Calu3 (cell line): ENCODE measurements at regions of chr10 and their contacts with region 1.

Region 1: DNA sequence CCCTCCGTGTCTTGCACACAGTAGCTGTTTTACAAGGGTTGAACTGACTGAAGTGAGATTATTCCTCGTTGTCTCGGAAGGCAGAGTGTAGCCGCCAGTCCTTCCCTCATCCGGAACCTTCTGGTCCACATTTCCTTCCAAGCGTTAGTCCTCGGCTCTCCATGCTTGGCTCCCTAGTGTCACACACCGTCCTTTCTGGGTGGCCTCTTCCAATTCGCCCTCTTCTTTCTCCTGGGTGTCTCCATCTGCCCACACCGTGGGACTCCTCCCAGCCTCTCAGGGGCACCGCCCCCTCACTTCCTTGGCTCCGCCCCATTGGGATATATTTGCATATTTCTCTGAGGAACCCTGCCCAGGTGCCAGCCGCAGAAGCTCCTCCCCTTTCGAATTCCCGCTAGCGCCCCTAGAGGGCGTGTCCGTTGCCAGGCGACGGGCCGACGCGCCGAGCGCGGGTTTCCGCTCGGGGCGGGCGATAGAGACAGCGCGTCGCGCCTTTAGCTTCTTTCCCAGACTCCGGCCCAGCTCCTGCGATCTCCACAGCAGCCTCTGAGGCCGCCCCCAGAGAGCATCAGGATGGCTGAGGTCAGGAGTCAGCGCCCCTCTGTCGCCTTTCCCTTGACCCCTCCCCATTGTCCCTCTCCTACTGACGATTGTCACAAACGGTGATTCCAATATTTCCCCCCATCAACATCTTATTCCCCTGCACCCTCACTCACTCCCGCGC is at the start of gene CFAP58:
- DNase-seq: peak; percentile 91
- H3K4me3 Mint-ChIP-seq: no peak within 1 kb of the TSS
- H3K27ac Mint-ChIP-seq: no peak within 1 kb of the TSS
- H3K4me1 Mint-ChIP-seq: peaks cover 7% of the 10 kb centered on the region
- H3K27me3 Mint-ChIP-seq: no peaks in the 10 kb centered on the region
- CTCF ChIP-seq: peak; percentile 36
- total RNA-seq, gene CFAP58: not detected in 2 replicates

Region 2: GRCh38 chr10:104274762-104275721 is 78.4 kb before region 1 on chr10:
- CTCF ChIA-PET with region 1: interaction called, 13 read pairs
- intact Hi-C with region 1: no loop called
- DNase-seq: peak; percentile 68
- H3K4me3 Mint-ChIP-seq: peak overlapping the region; percentile 87
- H3K27ac Mint-ChIP-seq: peak overlapping the region; percentile 69
- H3K4me1 Mint-ChIP-seq: peaks cover 5% of the 10 kb centered on the region
- H3K27me3 Mint-ChIP-seq: no peaks in the 10 kb centered on the region
- CTCF ChIP-seq: peak; percentile 64

Region 3: GRCh38 chr10:104291439-104291951 is 62.0 kb before region 1 on chr10:
- CTCF ChIA-PET with region 1: interaction called, 3 read pairs
- intact Hi-C with region 1: loop called (anchors 1 kb)
- DNase-seq: peak; percentile 83
- H3K4me3 Mint-ChIP-seq: no peak overlapping the region
- H3K27ac Mint-ChIP-seq: peak overlapping the region; percentile 70
- H3K4me1 Mint-ChIP-seq: no peaks in the 10 kb centered on the region
- H3K27me3 Mint-ChIP-seq: no peaks in the 10 kb centered on the region
- CTCF ChIP-seq: peak; percentile 93

Region 4: GRCh38 chr10:104306897-104307296 is 46.6 kb before region 1 on chr10:
- CTCF ChIA-PET with region 1: interaction called, 7 read pairs
- intact Hi-C with region 1: loop called (anchors 1 kb)
- DNase-seq: no peak
- H3K4me3 Mint-ChIP-seq: no peak overlapping the region
- H3K27ac Mint-ChIP-seq: no peak overlapping the region
- H3K4me1 Mint-ChIP-seq: peaks cover 9% of the 10 kb centered on the region
- H3K27me3 Mint-ChIP-seq: no peaks in the 10 kb centered on the region
- CTCF ChIP-seq: no peak